ENCODE measurements at regions of chr13 and their contacts with region 1.

Region 1: DNA sequence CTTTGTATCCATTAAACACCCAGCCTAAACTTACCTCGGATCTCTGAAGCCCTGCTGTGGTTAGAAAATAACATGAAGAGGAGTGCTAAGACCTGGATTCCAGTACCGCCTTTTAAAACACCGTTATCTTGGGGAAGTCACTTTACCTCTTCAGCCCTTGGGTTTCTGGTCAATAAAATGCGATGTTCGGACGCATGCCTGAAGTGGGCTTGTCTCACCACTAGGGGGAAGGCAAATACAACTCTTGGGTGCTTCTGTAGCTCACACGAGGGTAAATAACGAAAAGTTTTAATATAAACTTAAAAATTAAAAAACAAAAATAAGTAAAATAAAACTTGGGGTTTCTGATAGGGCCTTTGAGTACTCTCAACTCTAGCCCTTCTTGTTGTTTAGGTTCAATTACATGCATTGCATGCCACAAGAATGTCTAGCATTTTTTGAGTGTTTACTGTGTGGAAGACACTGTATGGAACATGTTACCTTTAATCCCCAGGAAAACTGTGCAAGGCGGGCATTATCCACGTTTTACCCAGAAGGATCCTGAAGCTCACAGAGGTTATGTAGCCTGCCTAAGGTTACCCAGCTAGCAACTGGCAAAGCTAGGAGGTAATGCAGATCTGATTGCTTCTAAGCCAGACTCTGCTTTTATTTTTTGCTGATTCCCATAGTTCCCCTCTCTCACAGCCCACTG is 240.4 kb downstream of the LMO7 start:
- DNase-seq: peak; percentile 54 to 67
- H3K4me3 ChIP-seq: no peak overlapping the region
- H3K4me1 ChIP-seq: no peaks in the 10 kb centered on the region
- H3K27me3 ChIP-seq: peaks cover 4% of the 10 kb centered on the region; the same call in 1 of the 2 replicates

Region 2: DNA sequence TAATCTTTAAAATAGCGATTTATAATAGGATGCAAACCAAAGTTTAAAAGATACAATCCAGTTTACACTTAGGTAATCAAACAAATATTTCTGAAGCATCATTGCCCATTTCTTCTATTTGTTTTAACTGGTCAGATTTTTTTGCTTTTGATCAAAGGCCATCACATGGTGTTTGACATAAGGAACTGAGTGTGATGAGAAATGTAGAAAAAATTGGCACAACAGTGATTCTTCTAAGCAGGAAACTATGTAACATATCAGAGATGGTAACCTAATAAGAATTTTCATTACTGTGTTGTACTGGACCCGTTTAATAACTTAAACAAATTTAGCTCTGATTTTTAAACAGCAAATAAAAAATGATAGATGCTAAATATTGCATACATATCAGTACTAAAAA is 1097.6 kb before region 1 on chr13:
- in situ Hi-C with region 1: no loop called
- DNase-seq: no peak
- H3K4me3 ChIP-seq: no peak overlapping the region
- H3K4me1 ChIP-seq: peaks cover 14% of the 10 kb centered on the region
- H3K27me3 ChIP-seq: no peaks in the 10 kb centered on the region

Region 3: DNA sequence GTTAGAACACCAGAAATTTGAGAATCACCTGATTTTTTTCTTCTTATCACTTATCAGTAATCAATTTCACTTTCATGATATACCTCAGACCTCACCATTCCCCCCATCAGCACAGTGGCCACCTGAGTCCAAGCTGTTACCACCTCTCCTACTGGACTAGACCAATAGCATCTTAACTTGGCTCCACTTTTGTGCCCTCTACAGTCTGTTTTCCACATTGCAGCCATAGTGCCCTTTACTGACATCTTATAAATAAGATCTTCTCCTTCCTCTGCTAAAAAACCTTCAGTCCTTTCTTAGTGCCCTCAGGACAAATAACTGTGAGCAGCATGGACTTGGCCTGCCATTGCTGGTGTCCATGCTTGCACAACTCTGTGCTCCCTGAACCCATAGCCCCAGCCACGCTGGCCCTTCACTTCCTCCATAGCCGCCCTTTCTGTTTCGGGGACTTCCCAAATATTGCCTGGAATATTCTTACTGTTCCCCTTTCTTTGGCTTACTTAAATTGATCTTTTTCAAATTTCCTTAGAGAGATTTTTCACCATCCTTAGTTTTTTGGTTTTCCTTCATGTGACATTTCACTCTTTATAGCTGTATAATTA is 140.4 kb after region 1 on chr13:
- in situ Hi-C with region 1: loop called (anchors 10 kb)
- DNase-seq: peak; percentile 12 to 58
- H3K4me3 ChIP-seq: no peak overlapping the region
- H3K4me1 ChIP-seq: no peaks in the 10 kb centered on the region
- H3K27me3 ChIP-seq: peaks cover 6% of the 10 kb centered on the region; the same call in 1 of the 2 replicates

Region 4: GRCh38 chr13:76473552-76474134 is 597.1 kb after region 1 on chr13:
- in situ Hi-C with region 1: loop called (anchors 5 kb)
- DNase-seq: peak; percentile 62 to 85
- H3K4me3 ChIP-seq: no peak overlapping the region
- H3K4me1 ChIP-seq: no peaks in the 10 kb centered on the region
- H3K27me3 ChIP-seq: 0 out of 2 replicates have a peak, but pooled peaks cover 3% of the 10 kb centered on the region